ENCODE measurements at regions of chr7 and their contacts with region 1.

Region 1: GRCh38 chr7:77651573-77652162 is 44.6 kb upstream of the RSBN1L start:
- DNase-seq: no peak
- H3K4me3 ChIP-seq: no peak overlapping the region
- H3K27ac ChIP-seq: no peak overlapping the region
- H3K4me1 ChIP-seq: no peaks in the 10 kb centered on the region
- H3K27me3 ChIP-seq: no peaks in the 10 kb centered on the region
- CTCF ChIP-seq: peak; percentile 56 to 66 (median 61)
- POLR2A ChIP-seq: no peak

Region 2: GRCh38 chr7:77707504-77707992 is 55.9 kb after region 1 on chr7:
- intact Hi-C with region 1: no loop called
- DNase-seq: no peak
- H3K4me3 ChIP-seq: no peak overlapping the region
- H3K27ac ChIP-seq: no peak overlapping the region
- H3K4me1 ChIP-seq: peaks cover 35% of the 10 kb centered on the region
- H3K27me3 ChIP-seq: no peaks in the 10 kb centered on the region
- CTCF ChIP-seq: no peak
- POLR2A ChIP-seq: no peak

Region 3: GRCh38 chr7:77760809-77761453 is 109.3 kb after region 1 on chr7:
- intact Hi-C with region 1: loop called (anchors 5 kb)
- DNase-seq: no peak
- H3K4me3 ChIP-seq: no peak overlapping the region
- H3K27ac ChIP-seq: no peak overlapping the region
- H3K4me1 ChIP-seq: peaks cover 33% of the 10 kb centered on the region
- H3K27me3 ChIP-seq: no peaks in the 10 kb centered on the region
- CTCF ChIP-seq: no peak
- POLR2A ChIP-seq: no peak

Measured in vagina (tissue), 2 donors.